ENCODE measurements at regions of chr2 and their contacts with region 1.

Region 1: DNA sequence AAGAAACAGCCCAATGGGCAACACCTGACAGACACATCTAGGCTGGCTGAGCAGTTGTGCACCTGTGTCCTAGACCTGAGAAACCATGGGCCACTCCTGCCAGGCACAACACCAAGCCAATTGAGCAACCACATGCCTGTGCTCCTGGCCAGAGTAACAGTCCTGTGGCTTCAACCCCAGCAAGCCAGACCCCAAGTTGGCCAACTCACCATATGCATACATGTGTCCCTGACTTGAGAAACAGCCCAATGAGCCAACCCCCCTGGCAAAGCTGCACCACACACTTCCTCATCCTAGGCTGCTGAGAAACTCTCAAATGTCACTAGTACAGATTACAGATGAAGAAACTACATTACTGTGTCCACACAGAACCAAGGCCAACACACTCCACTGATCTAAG is 36.6 kb downstream of the USP34 start:
- DNase-seq: no peak
- H3K4me3 ChIP-seq: no peak overlapping the region
- H3K27ac ChIP-seq: no peak overlapping the region
- H3K4me1 ChIP-seq: no peaks in the 10 kb centered on the region
- H3K27me3 ChIP-seq: no peaks in the 10 kb centered on the region
- CTCF ChIP-seq: no peak
- POLR2A ChIP-seq: no peak

Region 2: GRCh38 chr2:61419129-61419528 is 15.2 kb before region 1 on chr2:
- intact Hi-C with region 1: no loop called
- DNase-seq: no peak
- H3K4me3 ChIP-seq: no peak overlapping the region
- H3K27ac ChIP-seq: no peak overlapping the region
- H3K4me1 ChIP-seq: peaks cover 0 to 6% of the 10 kb centered on the region in 2 donors
- H3K27me3 ChIP-seq: no peaks in the 10 kb centered on the region
- CTCF ChIP-seq: no peak
- POLR2A ChIP-seq: no peak

Region 3: DNA sequence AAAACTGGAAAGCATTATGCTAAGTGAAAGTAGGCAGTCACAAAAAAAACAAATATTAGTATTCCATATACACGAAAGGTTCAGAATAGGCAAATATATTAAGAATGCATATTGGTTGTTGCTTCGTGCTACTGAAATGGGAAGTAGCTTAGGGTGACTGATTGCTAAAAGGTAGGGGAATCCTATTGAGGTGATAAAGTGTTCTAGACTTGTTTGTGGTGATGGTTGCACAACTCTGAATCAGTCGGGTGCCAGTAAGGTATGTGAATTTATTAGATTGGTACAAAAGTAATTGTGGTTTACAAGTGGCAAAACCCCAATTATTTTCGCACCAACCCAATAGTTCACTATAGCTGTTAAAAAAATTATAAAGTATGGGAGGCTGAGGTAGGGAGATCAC is 15.8 kb after region 1 on chr2:
- intact Hi-C with region 1: no loop called
- DNase-seq: no peak
- H3K4me3 ChIP-seq: no peak overlapping the region
- H3K27ac ChIP-seq: no peak overlapping the region
- H3K4me1 ChIP-seq: no peaks in the 10 kb centered on the region
- H3K27me3 ChIP-seq: no peaks in the 10 kb centered on the region
- CTCF ChIP-seq: no peak
- POLR2A ChIP-seq: no peak

Region 4: GRCh38 chr2:61485281-61485680 is 51.0 kb after region 1 on chr2:
- intact Hi-C with region 1: loop called (anchors 10 kb)
- DNase-seq: no peak
- H3K4me3 ChIP-seq: no peak overlapping the region
- H3K27ac ChIP-seq: no peak overlapping the region
- H3K4me1 ChIP-seq: no peaks in the 10 kb centered on the region
- H3K27me3 ChIP-seq: no peaks in the 10 kb centered on the region
- CTCF ChIP-seq: no peak
- POLR2A ChIP-seq: no peak

Measured in breast epithelium (tissue), 4 donors.